K562 (cell line): ENCODE measurements at regions of chr3 and their contacts with region 1.

Region 1: DNA sequence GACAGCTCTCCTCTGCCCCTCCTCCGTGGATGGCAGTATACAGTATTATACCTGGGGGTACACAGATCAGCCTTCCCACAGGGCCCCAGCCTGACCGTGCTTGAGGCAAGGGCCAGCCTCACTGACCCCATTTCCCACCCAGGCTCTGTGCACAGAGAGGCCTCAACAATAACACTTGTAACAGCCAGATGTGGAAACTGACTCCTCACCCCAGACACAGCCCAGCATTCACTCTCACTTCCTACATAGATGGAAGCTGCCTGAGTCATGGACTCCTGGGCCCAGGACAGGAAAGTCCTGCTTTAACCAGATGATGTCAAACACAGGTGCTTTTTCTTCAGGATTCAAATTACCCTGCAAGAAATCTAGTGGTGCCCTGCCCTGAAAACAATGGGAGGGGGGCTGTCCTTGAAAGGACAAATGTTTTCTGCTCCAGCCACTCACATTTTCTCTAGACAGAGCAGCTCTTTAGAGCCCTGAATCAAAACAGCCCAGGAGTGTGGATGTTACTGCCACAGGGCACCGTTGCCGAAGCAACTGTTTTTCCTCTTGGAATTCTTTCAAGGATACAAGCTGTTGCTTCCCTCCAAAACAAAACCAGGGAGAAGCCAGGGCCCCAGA is 16.4 kb downstream of the CCDC12 start:
- DNase-seq: no peak
- ATAC-seq: peak; percentile 4; the same call in 2 of the 3 replicates
- H3K4me3 ChIP-seq: no peak overlapping the region
- H3K27ac ChIP-seq: 0 out of 3 replicates have a peak overlapping the region, but pooled peaks have one; percentile 13
- H3K4me1 ChIP-seq: peaks cover 25 to 43% of the 10 kb centered on the region in 2 experiments
- H3K27me3 ChIP-seq: no peaks in the 10 kb centered on the region
- CTCF ChIP-seq: no peak
- EP300 ChIP-seq: no peak
- POLR2A ChIP-seq: no peak
- RAD21 ChIP-seq: no peak

Region 2: DNA sequence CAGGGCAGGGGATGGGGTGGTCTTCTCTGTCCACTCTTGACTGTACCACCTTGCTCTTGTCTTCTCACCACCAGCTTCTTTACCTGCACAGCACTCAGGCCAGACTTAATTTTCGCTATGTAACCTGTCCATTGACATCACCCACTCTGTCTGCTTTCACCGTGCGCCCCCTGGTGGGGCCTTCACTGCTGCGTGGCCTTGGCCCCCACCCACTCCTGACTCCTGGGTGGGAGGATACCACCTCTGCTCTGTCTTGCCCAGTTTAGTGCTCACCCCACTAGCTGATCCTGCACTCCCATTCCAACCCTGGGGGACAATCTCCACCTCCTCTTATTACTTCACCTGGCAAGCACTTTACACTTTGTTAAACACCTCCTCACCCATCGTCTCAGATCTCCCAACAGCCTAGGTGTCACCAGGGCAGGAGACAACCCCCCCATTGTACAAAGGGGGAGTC is 65.0 kb before region 1 on chr3:
- CTCF ChIA-PET with region 1: no interaction called
- POLR2A ChIA-PET with region 1: no interaction called
- in situ Hi-C with region 1: no loop called
- intact Hi-C with region 1: no loop called
- DNase-seq: peak; percentile 84 to 86 (median 85)
- ATAC-seq: peak; percentile 92
- H3K4me3 ChIP-seq: no peak overlapping the region
- H3K27ac ChIP-seq: no peak overlapping the region
- H3K4me1 ChIP-seq: peaks cover 0 to 37% of the 10 kb centered on the region in 2 experiments; a peak in 3 of 5 replicates
- H3K27me3 ChIP-seq: peaks cover 20 to 62% of the 10 kb centered on the region in 2 experiments; a peak in 4 of 5 replicates
- CTCF ChIP-seq: peak; percentile 91 to 99 (median 93)
- EP300 ChIP-seq: no peak
- POLR2A ChIP-seq: no peak
- RAD21 ChIP-seq: peak; percentile 79 to 97

Region 3: DNA sequence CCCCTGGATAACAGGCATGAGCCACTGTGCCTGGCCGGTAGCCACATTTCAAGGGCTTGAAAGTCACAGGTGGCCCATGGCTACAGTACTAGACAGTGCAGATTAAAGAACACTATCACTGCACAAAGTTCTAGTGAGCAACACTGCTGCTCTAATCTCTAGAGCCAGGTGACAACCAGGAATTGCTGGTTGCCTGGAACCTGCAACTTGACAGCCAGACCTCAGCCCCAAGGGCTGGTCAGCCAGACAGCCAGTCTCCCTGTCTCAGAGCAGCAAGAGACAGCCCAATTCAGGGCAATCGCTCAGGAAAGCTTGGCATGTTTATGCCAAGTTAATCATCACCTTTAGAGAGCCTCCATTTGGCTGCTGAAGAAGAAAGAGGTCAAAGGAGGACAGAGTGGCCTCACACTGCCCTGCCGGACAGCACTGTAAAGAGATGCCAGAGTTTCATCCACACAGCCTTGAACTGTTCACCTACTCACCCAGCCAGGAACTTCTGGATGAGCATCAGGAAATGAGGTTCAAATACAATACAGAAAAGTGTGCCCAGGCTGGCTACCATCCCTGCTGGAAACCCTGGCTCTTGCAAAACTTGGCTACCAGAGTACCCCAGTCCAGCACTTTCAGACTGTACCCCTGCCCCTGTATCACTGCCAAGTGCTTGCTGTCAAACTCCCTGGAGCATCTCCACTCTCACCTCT is 10.3 kb after region 1 on chr3:
- CTCF ChIA-PET with region 1: no interaction called
- POLR2A ChIA-PET with region 1: interaction called, 55 read pairs
- in situ Hi-C with region 1: no loop called
- intact Hi-C with region 1: no loop called
- DNase-seq: peak in 2 of 4 experiments; percentile 63 to 80
- ATAC-seq: peak; percentile 68
- H3K4me3 ChIP-seq: no peak overlapping the region
- H3K27ac ChIP-seq: peak overlapping the region; percentile 27; the same call in 1 of the 3 replicates
- H3K4me1 ChIP-seq: peaks cover 48 to 58% of the 10 kb centered on the region in 2 experiments
- H3K27me3 ChIP-seq: no peaks in the 10 kb centered on the region
- CTCF ChIP-seq: no peak
- EP300 ChIP-seq: peak; percentile 51; the same call in 1 of the 2 replicates
- POLR2A ChIP-seq: no peak
- RAD21 ChIP-seq: peak in 1 of 2 experiments; percentile 10; a peak in 2 of 4 replicates